CD4-positive, alpha-beta T cell (primary cell): ENCODE measurements at regions of chr6 and their contacts with region 1.

Region 1: GRCh38 chr6:42547407-42548329 is 16.2 kb upstream of the UBR2 start:
- DNase-seq: peak; percentile 72 to 91 (median 86)
- ATAC-seq: peak; percentile 98
- H3K4me3 ChIP-seq: peak overlapping the region; percentile 38
- H3K4me3 Mint-ChIP-seq: peak overlapping the region; percentile 66
- H3K27ac ChIP-seq: no peak overlapping the region
- H3K27ac Mint-ChIP-seq: peak overlapping the region; percentile 65
- H3K4me1 ChIP-seq: peaks cover 11% of the 10 kb centered on the region
- H3K4me1 Mint-ChIP-seq: peaks cover 12% of the 10 kb centered on the region
- H3K27me3 ChIP-seq: no peaks in the 10 kb centered on the region
- H3K27me3 Mint-ChIP-seq: peaks cover 13% of the 10 kb centered on the region
- CTCF ChIP-seq: peak; percentile 93

Region 2: GRCh38 chr6:42260972-42261371 is 286.7 kb before region 1 on chr6:
- CTCF ChIA-PET with region 1: interaction called, 44 read pairs
- POLR2A ChIA-PET with region 1: interaction called, 7 read pairs
- intact Hi-C with region 1: loop called (anchors 1 kb)
- DNase-seq: peak in 13 of 14 experiments; percentile 14 to 55 (median 26)
- ATAC-seq: peak; percentile 63
- H3K4me3 ChIP-seq: no peak overlapping the region
- H3K4me3 Mint-ChIP-seq: no peak overlapping the region
- H3K27ac ChIP-seq: no peak overlapping the region
- H3K27ac Mint-ChIP-seq: no peak overlapping the region
- H3K4me1 ChIP-seq: no peaks in the 10 kb centered on the region
- H3K4me1 Mint-ChIP-seq: peaks cover 7% of the 10 kb centered on the region
- H3K27me3 ChIP-seq: no peaks in the 10 kb centered on the region
- H3K27me3 Mint-ChIP-seq: no peaks in the 10 kb centered on the region
- CTCF ChIP-seq: peak; percentile 56

Region 3: GRCh38 chr6:42304053-42304712 is 243.5 kb before region 1 on chr6:
- CTCF ChIA-PET with region 1: interaction called, 21 read pairs
- POLR2A ChIA-PET with region 1: interaction called, 3 read pairs
- intact Hi-C with region 1: loop called in 1 of 2 experiments (anchors 1 kb)
- DNase-seq: no peak
- ATAC-seq: no peak
- H3K4me3 ChIP-seq: no peak overlapping the region
- H3K4me3 Mint-ChIP-seq: no peak overlapping the region
- H3K27ac ChIP-seq: no peak overlapping the region
- H3K27ac Mint-ChIP-seq: peak overlapping the region; percentile 18
- H3K4me1 ChIP-seq: peaks cover 6% of the 10 kb centered on the region
- H3K4me1 Mint-ChIP-seq: peaks cover 56% of the 10 kb centered on the region
- H3K27me3 ChIP-seq: no peaks in the 10 kb centered on the region
- H3K27me3 Mint-ChIP-seq: no peaks in the 10 kb centered on the region
- CTCF ChIP-seq: no peak

Region 4: GRCh38 chr6:42367353-42368011 is 180.2 kb before region 1 on chr6:
- CTCF ChIA-PET with region 1: no interaction called
- POLR2A ChIA-PET with region 1: interaction called, 3 read pairs
- intact Hi-C with region 1: loop called in 1 of 2 experiments (anchors 2 kb)
- DNase-seq: peak in 6 of 14 experiments; percentile 4 to 74 (median 51)
- ATAC-seq: peak; percentile 57
- H3K4me3 ChIP-seq: peak overlapping the region; percentile 36
- H3K4me3 Mint-ChIP-seq: peak overlapping the region; percentile 84
- H3K27ac ChIP-seq: peak overlapping the region; percentile 71 to 74
- H3K27ac Mint-ChIP-seq: peak overlapping the region; percentile 94
- H3K4me1 ChIP-seq: peaks cover 67% of the 10 kb centered on the region
- H3K4me1 Mint-ChIP-seq: peaks cover 80% of the 10 kb centered on the region
- H3K27me3 ChIP-seq: no peaks in the 10 kb centered on the region
- H3K27me3 Mint-ChIP-seq: no peaks in the 10 kb centered on the region
- CTCF ChIP-seq: no peak

Region 5: GRCh38 chr6:42400061-42400760 is 147.5 kb before region 1 on chr6:
- CTCF ChIA-PET with region 1: no interaction called
- POLR2A ChIA-PET with region 1: no interaction called
- intact Hi-C with region 1: no loop called
- DNase-seq: no peak
- ATAC-seq: no peak
- H3K4me3 ChIP-seq: no peak overlapping the region
- H3K4me3 Mint-ChIP-seq: no peak overlapping the region
- H3K27ac ChIP-seq: no peak overlapping the region
- H3K27ac Mint-ChIP-seq: peak overlapping the region; percentile 12
- H3K4me1 ChIP-seq: peaks cover 72% of the 10 kb centered on the region
- H3K4me1 Mint-ChIP-seq: peaks cover 86% of the 10 kb centered on the region
- H3K27me3 ChIP-seq: no peaks in the 10 kb centered on the region
- H3K27me3 Mint-ChIP-seq: no peaks in the 10 kb centered on the region
- CTCF ChIP-seq: no peak

Region 6: GRCh38 chr6:42532038-42532669 is 15.5 kb before region 1 on chr6:
- CTCF ChIA-PET with region 1: interaction called, 24 read pairs
- POLR2A ChIA-PET with region 1: no interaction called
- intact Hi-C with region 1: no loop called
- DNase-seq: peak in 5 of 14 experiments; percentile 5 to 73 (median 62)
- ATAC-seq: peak; percentile 54
- H3K4me3 ChIP-seq: no peak overlapping the region
- H3K4me3 Mint-ChIP-seq: no peak overlapping the region
- H3K27ac ChIP-seq: no peak overlapping the region
- H3K27ac Mint-ChIP-seq: no peak overlapping the region
- H3K4me1 ChIP-seq: no peaks in the 10 kb centered on the region
- H3K4me1 Mint-ChIP-seq: no peaks in the 10 kb centered on the region
- H3K27me3 ChIP-seq: no peaks in the 10 kb centered on the region
- H3K27me3 Mint-ChIP-seq: no peaks in the 10 kb centered on the region
- CTCF ChIP-seq: peak; percentile 91